T-cell (primary cell): ENCODE measurements at regions of chr19 and their contacts with region 1.

Region 1: DNA sequence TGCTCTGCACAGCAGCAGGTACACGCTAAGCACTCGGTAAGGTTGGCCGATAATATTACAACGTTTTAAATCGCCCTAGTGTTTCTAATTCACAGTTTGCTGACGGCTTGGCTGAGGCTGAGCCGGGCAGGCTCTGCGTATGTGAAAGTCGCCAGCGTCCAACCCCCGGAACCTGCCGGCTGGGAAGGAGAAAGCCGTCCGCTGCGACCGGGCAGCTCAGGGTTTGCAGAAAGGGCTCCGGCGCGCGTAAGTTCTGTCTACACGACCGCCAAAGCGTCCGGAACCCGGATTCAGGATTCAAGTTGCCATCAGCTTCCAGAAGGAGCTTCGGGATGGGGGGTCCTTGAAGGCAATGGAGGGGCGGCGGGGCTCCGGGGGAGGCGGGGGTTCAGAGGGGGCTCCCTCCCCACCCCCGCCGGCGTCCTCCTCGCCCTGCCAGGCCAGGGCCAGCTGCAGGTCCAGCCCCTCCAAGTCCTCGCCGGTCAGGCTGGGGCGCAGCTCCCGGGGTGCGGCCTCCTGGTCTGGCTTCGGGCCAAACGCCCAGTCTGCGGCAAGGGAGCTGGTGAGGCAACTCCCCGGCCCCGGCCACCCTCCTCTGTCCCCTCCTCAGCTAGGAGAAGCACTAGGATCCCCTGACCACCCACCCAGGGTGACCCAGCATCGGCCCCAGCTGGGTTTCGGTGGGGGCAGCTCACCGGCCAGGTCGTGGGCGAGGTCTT is 575 bp downstream of the SMIM44 start:
- DNase-seq: no peak
- ATAC-seq: no peak
- H3K4me3 ChIP-seq: no peak overlapping the region
- H3K4me3 Mint-ChIP-seq: no peak overlapping the region
- H3K27ac ChIP-seq: no peak overlapping the region
- H3K27ac Mint-ChIP-seq: no peak overlapping the region
- H3K4me1 ChIP-seq: peaks cover 2 to 23% of the 10 kb centered on the region in 2 experiments
- H3K4me1 Mint-ChIP-seq: peaks cover 9 to 31% (median 13%) of the 10 kb centered on the region in 3 donors
- H3K27me3 ChIP-seq: peaks cover 0 to 13% of the 10 kb centered on the region in 2 experiments
- H3K27me3 Mint-ChIP-seq: no peaks in the 10 kb centered on the region

Region 2: GRCh38 chr19:3333020-3333583 is 149.6 kb before region 1 on chr19:
- CTCF ChIA-PET with region 1: interaction called, 3 to 11 read pairs
- POLR2A ChIA-PET with region 1: no interaction called
- DNase-seq: no peak
- ATAC-seq: no peak
- H3K4me3 ChIP-seq: no peak overlapping the region
- H3K4me3 Mint-ChIP-seq: no peak overlapping the region
- H3K27ac ChIP-seq: no peak overlapping the region
- H3K27ac Mint-ChIP-seq: no peak overlapping the region
- H3K4me1 ChIP-seq: peaks cover 0 to 12% of the 10 kb centered on the region in 2 experiments
- H3K4me1 Mint-ChIP-seq: peaks cover 0 to 13% (median 3%) of the 10 kb centered on the region in 3 donors
- H3K27me3 ChIP-seq: peaks cover 0 to 14% of the 10 kb centered on the region in 2 experiments
- H3K27me3 Mint-ChIP-seq: no peaks in the 10 kb centered on the region